BJ (cell line): ENCODE measurements at regions of chr10 and their contacts with region 1.

Region 1: DNA sequence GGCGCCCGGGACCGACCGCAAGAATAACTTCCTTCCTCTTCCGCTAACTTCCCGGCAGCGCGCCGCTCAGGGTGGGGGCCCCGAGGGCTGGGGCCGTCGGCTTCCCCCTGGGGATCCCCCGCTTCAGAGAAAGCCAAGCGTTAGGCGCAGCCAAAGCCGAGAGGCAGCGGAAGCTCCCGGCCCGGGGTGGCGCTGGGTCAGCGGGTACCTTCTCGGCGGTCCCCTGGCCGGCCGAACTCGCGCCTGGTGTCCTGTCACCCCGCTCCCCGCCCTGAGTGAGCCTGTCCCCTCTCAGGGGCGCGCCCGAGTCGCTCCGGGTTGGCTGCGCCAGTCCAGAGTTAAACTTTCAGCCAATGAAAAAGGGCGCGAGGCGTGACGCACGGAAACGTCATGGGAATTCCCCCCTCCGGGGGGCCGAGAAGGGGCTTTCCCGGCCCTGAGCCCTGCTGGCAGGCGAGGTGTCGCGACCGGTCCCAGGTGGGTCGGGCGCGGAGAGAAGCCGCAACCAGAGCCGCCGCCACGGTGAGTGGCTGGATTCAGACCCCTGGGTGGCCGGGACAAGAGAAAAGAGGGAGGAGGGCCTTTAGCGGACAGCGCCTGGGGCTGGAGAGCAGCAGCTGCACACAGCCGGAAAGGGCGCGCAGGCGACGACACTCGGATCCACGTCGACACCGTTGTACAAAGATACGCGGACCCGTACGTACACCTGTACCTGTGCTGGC is 1.3 kb upstream of the NFKB2 start:
- DNase-seq: peak; percentile 51
- H3K4me3 ChIP-seq: peak overlapping the region; percentile 79
- H3K27me3 ChIP-seq: no peaks in the 10 kb centered on the region
- CTCF ChIP-seq: no peak; the same call in 1 of the 2 replicates

Region 2: DNA sequence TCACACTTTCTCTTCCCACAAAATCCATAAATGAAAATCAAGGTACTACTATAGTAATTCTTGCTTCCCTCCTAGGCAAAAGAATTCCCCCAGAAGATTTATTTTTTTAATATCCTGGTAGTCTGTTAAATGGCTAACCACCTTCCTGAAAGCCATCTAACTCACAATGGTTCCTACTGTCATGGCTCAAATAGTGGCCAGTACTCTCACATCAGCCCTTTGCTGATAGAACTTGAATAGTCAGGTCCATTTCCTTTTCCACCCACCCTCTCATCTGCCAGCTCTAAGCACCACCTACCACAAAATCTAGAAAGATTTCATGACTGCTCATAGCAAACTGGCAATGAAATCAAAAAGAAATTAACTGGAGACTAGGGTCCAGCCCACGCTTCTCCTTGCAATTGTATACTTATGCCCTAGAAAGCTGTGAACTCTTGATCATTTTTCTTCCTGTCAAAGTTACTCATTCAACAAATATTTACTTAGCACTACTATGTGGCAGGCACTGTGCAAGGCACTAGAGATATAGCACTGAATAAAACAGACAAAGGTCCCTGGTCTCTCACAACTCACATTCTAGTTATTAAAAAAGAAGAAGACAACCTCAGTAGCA is 398.7 kb before region 1 on chr10:
- CTCF ChIA-PET with region 1: no interaction called
- POLR2A ChIA-PET with region 1: no interaction called
- DNase-seq: no peak
- H3K4me3 ChIP-seq: no peak overlapping the region
- H3K27me3 ChIP-seq: no peaks in the 10 kb centered on the region
- CTCF ChIP-seq: no peak

Region 3: GRCh38 chr10:102375250-102375649 is 19.0 kb before region 1 on chr10:
- CTCF ChIA-PET with region 1: interaction called, 16 read pairs
- POLR2A ChIA-PET with region 1: no interaction called
- DNase-seq: no peak
- H3K4me3 ChIP-seq: no peak overlapping the region
- H3K27me3 ChIP-seq: no peaks in the 10 kb centered on the region
- CTCF ChIP-seq: no peak

Region 4: DNA sequence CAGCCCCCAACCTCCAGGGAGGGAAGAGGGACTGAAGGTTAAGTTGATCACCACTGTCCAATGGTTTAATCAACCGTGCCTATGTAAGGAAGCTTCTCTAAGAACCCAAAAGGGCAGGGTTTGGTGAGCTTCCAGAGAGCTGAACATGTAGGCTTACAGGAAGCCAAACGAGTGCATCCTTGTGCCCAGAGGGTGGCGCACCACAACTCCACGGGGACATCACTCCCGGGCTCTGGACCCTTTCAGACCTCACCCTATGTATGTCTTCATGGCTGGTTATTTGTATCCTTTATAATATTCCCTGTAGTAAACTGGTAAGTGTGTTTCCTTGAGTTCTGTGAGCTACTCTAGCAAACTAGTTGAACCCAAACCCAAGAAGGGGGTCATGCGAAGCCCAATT is 10.2 kb before region 1 on chr10:
- CTCF ChIA-PET with region 1: interaction called, 42 read pairs
- POLR2A ChIA-PET with region 1: no interaction called
- DNase-seq: no peak
- H3K4me3 ChIP-seq: no peak overlapping the region
- H3K27me3 ChIP-seq: no peaks in the 10 kb centered on the region
- CTCF ChIP-seq: peak; percentile 30; the same call in 1 of the 2 replicates

Region 5: GRCh38 chr10:102444851-102445250 is 50.6 kb after region 1 on chr10:
- CTCF ChIA-PET with region 1: no interaction called
- POLR2A ChIA-PET with region 1: no interaction called
- DNase-seq: no peak
- H3K4me3 ChIP-seq: no peak overlapping the region
- H3K27me3 ChIP-seq: no peaks in the 10 kb centered on the region
- CTCF ChIP-seq: no peak

Region 6: DNA sequence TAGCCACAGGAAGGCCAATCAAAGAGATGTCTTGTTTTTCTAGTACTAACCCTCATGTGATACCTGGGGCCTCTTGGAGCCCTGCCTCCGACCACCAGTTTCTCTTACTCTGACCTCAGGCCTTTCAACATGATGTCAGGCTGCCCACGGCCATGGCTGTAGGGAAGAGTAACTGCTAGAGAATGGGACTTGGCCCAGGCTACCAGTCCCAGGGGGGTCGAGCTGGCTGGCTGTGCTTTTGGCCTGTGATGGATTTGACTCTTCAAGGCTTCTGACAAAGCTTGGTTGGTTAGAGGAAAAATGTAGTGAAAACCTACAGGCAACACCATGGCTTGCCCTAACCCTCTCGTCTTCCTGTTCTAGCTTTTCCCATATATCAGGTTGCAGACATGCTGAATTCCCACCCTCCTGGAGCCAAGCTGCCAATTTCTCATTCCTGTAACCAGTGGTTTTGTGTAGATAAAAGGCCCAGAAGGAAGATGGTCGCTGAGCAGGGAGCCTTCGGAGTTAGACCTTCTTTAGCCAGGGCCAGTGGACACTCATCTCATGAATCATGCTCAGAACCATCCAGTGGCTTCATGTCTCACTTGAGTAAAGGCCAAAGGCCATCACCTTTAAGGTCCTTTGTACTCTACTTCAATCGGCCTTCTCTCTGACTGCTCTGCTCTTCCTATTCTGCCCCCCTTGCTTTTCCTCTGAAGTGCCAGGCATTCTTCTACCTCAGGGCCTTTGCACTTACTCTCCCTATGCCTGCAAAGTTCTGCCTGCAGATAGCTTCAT is 129.2 kb after region 1 on chr10:
- CTCF ChIA-PET with region 1: no interaction called
- POLR2A ChIA-PET with region 1: no interaction called
- DNase-seq: no peak
- H3K4me3 ChIP-seq: no peak overlapping the region
- H3K27me3 ChIP-seq: no peaks in the 10 kb centered on the region
- CTCF ChIP-seq: no peak